ENCODE measurements at regions of chr10 and their contacts with region 1.

Region 1: GRCh38 chr10:35126530-35127296 is at the start of gene CREM:
- DNase-seq: peak; percentile 90 to 99
- H3K4me3 ChIP-seq: peak within 1 kb of the TSS; percentile 68 to 93
- H3K27ac ChIP-seq: peak within 1 kb of the TSS; percentile 99 to 100
- H3K4me1 ChIP-seq: peaks cover 0 to 6% of the 10 kb centered on the region in 2 donors
- H3K27me3 ChIP-seq: no peaks in the 10 kb centered on the region
- CTCF ChIP-seq: peak; percentile 92 to 93 (median 92)
- total RNA-seq, gene CREM: 14.9 TPM

Region 2: GRCh38 chr10:35090162-35090954 is 36.4 kb before region 1 on chr10 and contains the start of gene CUL2:
- intact Hi-C with region 1: loop called (anchors 1 kb)
- DNase-seq: peak; percentile 46 to 95
- H3K4me3 ChIP-seq: peak within 1 kb of the TSS; percentile 97 to 99
- H3K27ac ChIP-seq: peak within 1 kb of the TSS; percentile 94 to 96
- H3K4me1 ChIP-seq: peaks cover 0 to 26% of the 10 kb centered on the region in 2 donors
- H3K27me3 ChIP-seq: no peaks in the 10 kb centered on the region
- CTCF ChIP-seq: no peak
- total RNA-seq, gene CUL2: 9.7 TPM

Region 3: GRCh38 chr10:35140727-35141126 is 14.0 kb after region 1 on chr10:
- intact Hi-C with region 1: no loop called
- DNase-seq: no peak
- H3K4me3 ChIP-seq: no peak overlapping the region
- H3K27ac ChIP-seq: no peak overlapping the region
- H3K4me1 ChIP-seq: no peaks in the 10 kb centered on the region
- H3K27me3 ChIP-seq: no peaks in the 10 kb centered on the region
- CTCF ChIP-seq: no peak

Region 4: DNA sequence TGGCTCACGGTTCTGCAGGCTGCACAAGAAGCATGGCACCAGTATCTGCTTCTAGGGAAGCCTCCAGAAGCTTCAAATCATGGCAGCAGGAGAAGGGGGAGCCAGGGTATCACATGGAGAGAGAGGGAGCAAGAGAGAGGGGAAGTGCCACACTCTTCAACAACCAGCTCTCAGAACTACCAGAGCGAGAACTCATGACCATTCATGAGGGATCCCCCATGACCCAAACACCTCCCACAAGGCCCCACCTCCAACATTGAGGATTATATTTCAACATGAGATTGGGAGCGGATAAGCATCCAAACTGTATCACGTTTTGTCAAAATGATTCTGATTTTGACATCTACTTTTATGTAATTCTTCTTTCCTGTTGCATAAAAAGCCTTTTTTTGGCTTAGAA is 38.4 kb after region 1 on chr10:
- intact Hi-C with region 1: no loop called
- DNase-seq: no peak
- H3K4me3 ChIP-seq: no peak overlapping the region
- H3K27ac ChIP-seq: no peak overlapping the region
- H3K4me1 ChIP-seq: no peaks in the 10 kb centered on the region
- H3K27me3 ChIP-seq: no peaks in the 10 kb centered on the region
- CTCF ChIP-seq: no peak

Region 5: GRCh38 chr10:35195361-35196306 is 68.9 kb after region 1 on chr10:
- intact Hi-C with region 1: loop called (anchors 1 kb)
- DNase-seq: peak; percentile 53 to 91
- H3K4me3 ChIP-seq: peak overlapping the region; percentile 53 to 68
- H3K27ac ChIP-seq: peak overlapping the region; percentile 96
- H3K4me1 ChIP-seq: no peaks in the 10 kb centered on the region
- H3K27me3 ChIP-seq: no peaks in the 10 kb centered on the region
- CTCF ChIP-seq: peak; percentile 87 to 93 (median 90)

Region 6: DNA sequence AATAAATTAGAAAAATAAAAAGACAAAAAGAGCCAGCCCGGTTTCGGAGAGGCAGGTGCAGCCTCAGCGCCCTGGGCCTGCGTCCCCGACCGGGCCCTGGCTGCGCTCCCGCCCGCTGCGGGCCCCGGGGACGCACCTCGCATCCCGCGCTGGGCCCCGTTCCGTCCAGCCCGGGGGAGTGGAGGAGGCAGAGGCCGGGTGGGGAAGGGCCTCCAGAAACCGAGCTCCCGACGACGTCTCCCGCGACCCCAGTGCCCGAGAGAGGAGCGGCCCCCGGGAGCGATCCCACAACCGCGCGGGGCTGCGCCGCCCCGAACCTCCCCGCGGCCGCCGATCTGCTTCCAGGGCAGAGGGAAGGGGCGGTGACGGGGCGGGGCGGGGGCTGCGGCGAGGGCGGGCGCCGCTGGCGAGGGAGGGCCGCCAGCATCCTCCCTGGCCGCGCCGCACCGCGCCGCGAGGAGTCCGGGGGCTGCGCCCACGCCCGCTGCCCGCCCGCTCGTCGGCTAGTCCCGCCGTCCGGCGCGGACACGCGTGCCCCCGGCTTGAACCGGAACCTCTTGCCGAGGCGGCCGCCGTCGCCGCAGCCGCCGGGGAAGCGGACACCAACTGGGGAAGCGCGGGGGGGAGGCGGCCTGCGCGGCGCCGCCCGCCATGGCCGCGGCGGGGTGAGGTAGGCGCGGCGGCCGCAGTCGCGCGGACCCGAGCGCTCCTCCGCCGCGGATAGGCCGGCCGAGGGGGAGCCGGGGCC is 209.5 kb after region 1 on chr10 and contains the start of gene CCNY:
- intact Hi-C with region 1: loop called (anchors 2 kb)
- DNase-seq: peak in 1 of 2 donors; percentile 83
- H3K4me3 ChIP-seq: peak within 1 kb of the TSS; percentile 65 to 98
- H3K27ac ChIP-seq: peak within 1 kb of the TSS; percentile 70 to 80
- H3K4me1 ChIP-seq: peaks cover 3 to 35% of the 10 kb centered on the region in 2 donors
- H3K27me3 ChIP-seq: no peaks in the 10 kb centered on the region
- CTCF ChIP-seq: peak in 1 of 3 experiments; percentile 16
- total RNA-seq, gene CCNY: 37.5 TPM

Region 7: GRCh38 chr10:35563261-35563891 is 436.7 kb after region 1 on chr10:
- intact Hi-C with region 1: loop called (anchors 10 kb)
- DNase-seq: peak in 1 of 2 donors; percentile 71
- H3K4me3 ChIP-seq: no peak overlapping the region
- H3K27ac ChIP-seq: peak overlapping the region in 1 of 2 donors; percentile 3
- H3K4me1 ChIP-seq: peaks cover 0 to 22% of the 10 kb centered on the region in 2 donors
- H3K27me3 ChIP-seq: no peaks in the 10 kb centered on the region
- CTCF ChIP-seq: peak; percentile 77 to 99 (median 96)

Measured in ascending aorta (tissue), 2 donors.